Aorta (tissue), 5 donors: ENCODE measurements at regions of chr7 and their contacts with region 1.

Region 1: GRCh38 chr7:129367700-129368388 is 66.4 kb upstream of the STRIP2 start:
- DNase-seq: peak; percentile 83 to 90
- ATAC-seq: peak; percentile 87
- H3K4me3 ChIP-seq: no peak overlapping the region
- H3K27ac ChIP-seq: no peak overlapping the region
- H3K4me1 ChIP-seq: no peaks in the 10 kb centered on the region
- H3K27me3 ChIP-seq: no peaks in the 10 kb centered on the region

Region 2: GRCh38 chr7:129423700-129424618 is 56.1 kb after region 1 on chr7:
- intact Hi-C with region 1: no loop called
- DNase-seq: no peak
- ATAC-seq: no peak
- H3K4me3 ChIP-seq: no peak overlapping the region
- H3K27ac ChIP-seq: no peak overlapping the region
- H3K4me1 ChIP-seq: no peaks in the 10 kb centered on the region
- H3K27me3 ChIP-seq: no peaks in the 10 kb centered on the region

Region 3: GRCh38 chr7:129471402-129471827 is 103.6 kb after region 1 on chr7:
- intact Hi-C with region 1: loop called (anchors 2 to 5 kb)
- DNase-seq: no peak
- ATAC-seq: no peak
- H3K4me3 ChIP-seq: no peak overlapping the region
- H3K27ac ChIP-seq: no peak overlapping the region
- H3K4me1 ChIP-seq: no peaks in the 10 kb centered on the region
- H3K27me3 ChIP-seq: no peaks in the 10 kb centered on the region

Region 4: DNA sequence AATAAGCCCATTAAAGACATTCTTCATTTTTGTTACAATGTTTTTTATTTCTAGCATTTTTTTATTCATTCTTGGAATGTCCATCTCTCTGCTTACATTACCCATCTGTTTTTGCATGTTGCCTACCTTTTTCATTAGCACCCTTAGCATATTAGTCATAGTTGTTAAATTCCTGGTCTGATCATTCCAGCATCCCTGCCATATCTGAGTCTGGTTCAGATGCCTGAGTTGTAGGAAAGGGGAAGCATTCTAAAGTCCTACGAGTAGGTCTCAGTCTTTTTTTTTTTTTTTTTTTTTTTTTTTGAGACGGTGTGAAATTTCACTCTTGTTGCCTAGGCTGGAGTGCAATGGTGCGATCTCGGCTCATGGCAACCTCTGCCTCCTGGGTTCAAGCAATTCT is 224.0 kb after region 1 on chr7:
- intact Hi-C with region 1: no loop called
- DNase-seq: no peak
- ATAC-seq: no peak
- H3K4me3 ChIP-seq: no peak overlapping the region
- H3K27ac ChIP-seq: no peak overlapping the region
- H3K4me1 ChIP-seq: no peaks in the 10 kb centered on the region
- H3K27me3 ChIP-seq: no peaks in the 10 kb centered on the region

Region 5: GRCh38 chr7:129635300-129636029 is 267.6 kb after region 1 on chr7:
- intact Hi-C with region 1: loop called (anchors 5 to 10 kb)
- DNase-seq: peak in 1 of 2 donors; percentile 67
- ATAC-seq: peak; percentile 63
- H3K4me3 ChIP-seq: no peak overlapping the region
- H3K27ac ChIP-seq: no peak overlapping the region
- H3K4me1 ChIP-seq: no peaks in the 10 kb centered on the region
- H3K27me3 ChIP-seq: no peaks in the 10 kb centered on the region

Region 6: GRCh38 chr7:129644634-129645230 is 276.9 kb after region 1 on chr7:
- intact Hi-C with region 1: loop called (anchors 5 to 10 kb)
- DNase-seq: no peak
- ATAC-seq: no peak
- H3K4me3 ChIP-seq: no peak overlapping the region
- H3K27ac ChIP-seq: no peak overlapping the region
- H3K4me1 ChIP-seq: no peaks in the 10 kb centered on the region
- H3K27me3 ChIP-seq: no peaks in the 10 kb centered on the region

Region 7: GRCh38 chr7:130010689-130011412 is 643.0 kb after region 1 on chr7:
- intact Hi-C with region 1: loop called in 1 of 2 experiments (anchors 10 kb)
- DNase-seq: peak; percentile 87
- ATAC-seq: peak; percentile 86
- H3K4me3 ChIP-seq: no peak overlapping the region
- H3K27ac ChIP-seq: peak overlapping the region in 1 of 2 donors; percentile 47
- H3K4me1 ChIP-seq: peaks cover 0 to 3% of the 10 kb centered on the region in 2 donors
- H3K27me3 ChIP-seq: no peaks in the 10 kb centered on the region